Head of caudate nucleus (tissue), 42 donors: ENCODE measurements at regions of chr19 and their contacts with region 1.

Region 1: GRCh38 chr19:41363753-41364523 is at the start of gene B9D2:
- DNase-seq: peak; percentile 95 to 99 (median 98)

Region 2: DNA sequence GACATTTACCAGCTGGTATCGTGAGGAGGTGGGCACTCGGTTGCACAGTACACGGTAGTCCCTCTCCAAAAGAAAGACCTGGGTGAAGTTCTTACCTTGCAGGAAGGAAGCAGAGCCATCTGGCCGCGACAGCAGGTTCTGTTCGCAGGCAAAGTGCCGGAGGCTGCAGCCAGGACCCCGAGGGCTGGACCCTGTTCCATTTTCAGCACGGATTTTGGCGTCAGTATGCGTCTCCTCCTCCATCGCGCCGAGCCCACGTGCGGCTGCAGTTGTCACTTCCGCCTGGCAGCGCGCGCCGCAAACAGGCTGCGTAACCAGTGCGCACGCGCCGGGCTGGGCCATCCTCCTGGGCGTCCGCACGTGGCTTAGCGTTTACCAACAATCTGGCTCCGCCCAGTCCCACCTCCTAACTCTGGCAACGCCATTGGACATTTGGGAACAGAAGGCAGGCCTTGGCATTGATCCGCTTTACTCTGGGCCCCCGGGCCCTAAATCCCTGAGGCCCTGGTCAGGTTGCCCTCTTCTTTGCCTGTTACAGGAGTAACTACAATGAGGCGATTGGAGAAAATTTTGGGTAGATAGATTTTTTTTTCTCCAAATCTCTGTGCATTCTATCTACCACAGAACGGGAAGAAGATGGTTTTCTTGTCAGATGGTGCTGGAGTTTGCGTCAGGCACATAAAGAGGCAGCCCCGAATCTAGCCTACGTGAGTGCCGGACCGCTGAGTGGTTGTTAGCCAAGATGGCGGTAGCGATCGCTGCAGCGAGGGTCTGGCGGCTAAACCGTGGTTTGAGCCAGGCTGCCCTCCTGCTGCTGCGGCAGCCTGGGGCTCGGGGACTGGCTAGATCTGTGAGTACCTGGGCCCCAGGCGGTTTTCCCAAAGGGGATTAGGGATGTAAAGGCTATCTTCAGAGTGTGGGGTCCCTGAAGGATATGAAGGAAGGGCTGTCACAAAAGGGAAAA is 33.4 kb after region 1 on chr19 and contains the starts of genes BCKDHA and EXOSC5:
- intact Hi-C with region 1: loop called (anchors 5 kb)
- DNase-seq: peak; percentile 97 to 100 (median 99)

Region 3: DNA sequence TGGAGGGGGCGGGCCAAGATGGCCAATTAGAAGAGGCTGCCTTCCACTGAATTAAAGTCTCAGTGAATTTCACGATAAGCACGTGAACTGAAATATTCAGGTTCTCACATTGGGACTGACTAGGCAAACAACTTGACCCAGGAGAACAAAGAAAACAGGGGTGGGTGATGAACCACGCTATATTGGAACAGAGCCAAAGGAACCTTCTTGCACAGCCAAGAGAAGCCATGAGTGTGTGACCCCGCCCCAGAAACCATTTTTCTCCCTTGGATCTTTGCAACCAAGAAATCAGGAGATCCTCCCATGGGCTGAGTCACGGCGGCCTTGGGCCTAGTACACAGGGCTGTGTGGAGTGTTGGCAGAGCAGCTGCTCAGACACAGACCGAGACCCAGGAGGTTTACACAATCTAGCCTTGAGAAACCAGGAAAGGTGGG is 115.8 kb after region 1 on chr19:
- intact Hi-C with region 1: no loop called
- DNase-seq: no peak